H1 (cell line): ENCODE measurements at regions of chr17 and their contacts with region 1.

Region 1: DNA sequence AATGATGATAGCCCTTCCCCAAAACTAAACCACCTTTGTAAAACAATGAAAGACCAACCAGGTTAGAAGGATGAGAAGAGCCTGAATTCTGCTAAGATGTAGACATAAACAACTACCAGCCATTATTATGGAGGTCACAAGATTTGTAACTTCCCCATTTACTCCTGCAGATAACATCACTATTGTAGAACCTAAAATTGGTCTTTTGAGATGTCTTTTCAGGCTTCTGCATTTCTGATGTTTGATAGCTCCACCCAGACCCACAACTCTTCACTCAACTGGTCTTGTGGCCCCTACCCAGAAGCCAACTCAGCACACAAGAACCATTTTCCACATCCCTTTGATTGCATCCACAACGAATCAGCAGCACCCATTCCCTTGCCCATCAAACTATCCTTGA is 100.8 kb downstream of the TMEM132E start:
- DNase-seq: no peak
- H3K4me3 ChIP-seq: no peak overlapping the region
- H3K27ac ChIP-seq: no peak overlapping the region
- H3K4me1 ChIP-seq: no peaks in the 10 kb centered on the region
- H3K27me3 ChIP-seq: no peaks in the 10 kb centered on the region; a peak in 2 of 7 replicates
- CTCF ChIP-seq: no peak
- EP300 ChIP-seq: no peak
- POLR2A ChIP-seq: no peak
- RAD21 ChIP-seq: no peak

Region 2: GRCh38 chr17:34665819-34666763 is 14.1 kb before region 1 on chr17:
- CTCF ChIA-PET with region 1: interaction called, 16 read pairs
- POLR2A ChIA-PET with region 1: interaction called, 4 read pairs
- DNase-seq: peak in 1 of 2 experiments; percentile 66
- H3K4me3 ChIP-seq: peak overlapping the region in 3 of 4 experiments; percentile 17 to 41 (median 34); a peak in 5 of 8 replicates
- H3K27ac ChIP-seq: no peak overlapping the region
- H3K4me1 ChIP-seq: peaks cover 7 to 20% (median 12%) of the 10 kb centered on the region in 4 experiments
- H3K27me3 ChIP-seq: no peaks in the 10 kb centered on the region; a peak in 1 of 7 replicates
- CTCF ChIP-seq: peak; percentile 33 to 50 (median 40)
- EP300 ChIP-seq: no peak
- POLR2A ChIP-seq: no peak
- RAD21 ChIP-seq: peak; percentile 25 to 38; a peak in 3 of 4 replicates

Region 3: GRCh38 chr17:34709151-34709754 is 29.1 kb after region 1 on chr17:
- CTCF ChIA-PET with region 1: no interaction called
- POLR2A ChIA-PET with region 1: no interaction called
- DNase-seq: no peak
- H3K4me3 ChIP-seq: no peak overlapping the region
- H3K27ac ChIP-seq: no peak overlapping the region
- H3K4me1 ChIP-seq: no peaks in the 10 kb centered on the region; a peak in 1 of 7 replicates
- H3K27me3 ChIP-seq: 0 out of 7 replicates have a peak, but pooled peaks cover 0 to 4% (median 0%) of the 10 kb centered on the region in 4 experiments
- CTCF ChIP-seq: no peak
- EP300 ChIP-seq: no peak
- POLR2A ChIP-seq: no peak
- RAD21 ChIP-seq: no peak

Region 4: DNA sequence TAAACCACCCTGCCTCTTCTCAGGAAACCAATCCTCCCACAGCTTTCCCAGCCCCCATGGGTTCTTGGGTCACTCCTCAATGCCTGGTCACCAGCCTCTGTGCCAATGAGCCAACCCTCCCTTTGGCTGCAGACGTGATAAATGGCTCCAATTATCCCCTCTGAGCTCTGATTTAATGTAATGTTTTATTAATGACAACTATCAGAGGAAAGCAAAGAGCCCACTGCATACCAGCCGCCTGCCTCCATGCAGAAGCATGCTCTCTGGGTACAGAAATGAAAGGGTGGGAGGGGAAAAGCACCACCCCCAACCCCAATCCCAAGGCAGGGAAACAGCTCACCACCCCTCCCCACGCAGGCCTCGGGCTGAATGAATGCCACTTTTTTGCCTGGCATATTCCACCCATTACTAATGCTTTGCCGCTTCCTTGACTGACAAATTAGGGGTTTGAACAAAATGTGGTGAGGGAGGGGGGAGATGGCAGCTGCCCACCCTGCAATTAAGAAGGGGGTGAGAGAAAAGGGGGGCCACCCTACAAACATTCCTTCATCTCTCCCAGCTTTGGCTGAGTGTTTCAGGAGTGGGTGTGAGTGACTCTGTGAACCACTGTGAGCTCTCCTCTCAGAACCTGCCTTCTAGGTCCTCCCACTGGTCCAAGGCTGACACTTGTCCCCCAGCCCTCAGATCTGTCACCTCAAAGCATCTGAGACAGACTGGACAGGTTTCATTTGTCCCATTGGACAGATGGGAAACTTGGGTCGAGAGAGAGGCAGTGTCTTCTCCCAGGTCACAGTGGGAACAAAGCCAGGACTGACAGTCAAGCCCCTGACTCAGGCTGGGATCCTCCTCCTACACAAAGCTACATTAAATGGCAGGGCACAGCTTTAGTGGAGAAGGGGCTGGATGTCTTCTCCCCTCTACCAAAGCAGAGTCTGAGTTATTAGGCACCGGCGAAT is 60.7 kb after region 1 on chr17:
- CTCF ChIA-PET with region 1: no interaction called
- POLR2A ChIA-PET with region 1: no interaction called
- DNase-seq: no peak
- H3K4me3 ChIP-seq: no peak overlapping the region
- H3K27ac ChIP-seq: no peak overlapping the region
- H3K4me1 ChIP-seq: 0 out of 7 replicates have a peak, but pooled peaks cover 0 to 2% (median 0%) of the 10 kb centered on the region in 4 experiments
- H3K27me3 ChIP-seq: no peaks in the 10 kb centered on the region
- CTCF ChIP-seq: no peak
- EP300 ChIP-seq: no peak
- POLR2A ChIP-seq: no peak
- RAD21 ChIP-seq: no peak